Activated CD8-positive, alpha-beta T cell treated with anti-CD3 and anti-CD28 coated beads for 36 hours (primary cell): ENCODE measurements at regions of chr2 and their contacts with region 1.

Region 1: DNA sequence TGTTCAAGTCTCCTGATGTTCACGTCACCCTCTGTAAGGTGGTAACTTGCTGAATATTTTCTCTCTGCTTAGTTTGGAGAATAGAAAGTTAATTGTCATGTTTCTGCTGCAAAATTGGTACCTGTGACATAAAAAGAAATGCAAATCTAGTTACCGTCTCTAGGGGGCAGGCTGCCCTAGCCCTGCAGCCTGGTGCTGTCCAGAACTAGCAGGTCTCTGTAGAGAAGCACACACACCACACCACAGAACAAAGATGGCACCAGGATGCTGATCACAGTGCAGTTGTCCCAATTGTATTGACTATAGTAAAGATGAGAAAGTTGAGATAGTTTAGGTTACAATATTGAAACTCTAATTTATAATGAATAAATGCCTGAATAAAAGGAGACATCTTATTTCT is 47.0 kb downstream of the SLC9A4 start:
- DNase-seq: peak; percentile 43
- ATAC-seq: peak; percentile 65
- H3K4me3 Mint-ChIP-seq: no peak overlapping the region
- H3K27ac Mint-ChIP-seq: no peak overlapping the region
- H3K4me1 Mint-ChIP-seq: no peaks in the 10 kb centered on the region
- H3K27me3 Mint-ChIP-seq: no peaks in the 10 kb centered on the region
- CTCF ChIP-seq: peak; percentile 74

Region 2: DNA sequence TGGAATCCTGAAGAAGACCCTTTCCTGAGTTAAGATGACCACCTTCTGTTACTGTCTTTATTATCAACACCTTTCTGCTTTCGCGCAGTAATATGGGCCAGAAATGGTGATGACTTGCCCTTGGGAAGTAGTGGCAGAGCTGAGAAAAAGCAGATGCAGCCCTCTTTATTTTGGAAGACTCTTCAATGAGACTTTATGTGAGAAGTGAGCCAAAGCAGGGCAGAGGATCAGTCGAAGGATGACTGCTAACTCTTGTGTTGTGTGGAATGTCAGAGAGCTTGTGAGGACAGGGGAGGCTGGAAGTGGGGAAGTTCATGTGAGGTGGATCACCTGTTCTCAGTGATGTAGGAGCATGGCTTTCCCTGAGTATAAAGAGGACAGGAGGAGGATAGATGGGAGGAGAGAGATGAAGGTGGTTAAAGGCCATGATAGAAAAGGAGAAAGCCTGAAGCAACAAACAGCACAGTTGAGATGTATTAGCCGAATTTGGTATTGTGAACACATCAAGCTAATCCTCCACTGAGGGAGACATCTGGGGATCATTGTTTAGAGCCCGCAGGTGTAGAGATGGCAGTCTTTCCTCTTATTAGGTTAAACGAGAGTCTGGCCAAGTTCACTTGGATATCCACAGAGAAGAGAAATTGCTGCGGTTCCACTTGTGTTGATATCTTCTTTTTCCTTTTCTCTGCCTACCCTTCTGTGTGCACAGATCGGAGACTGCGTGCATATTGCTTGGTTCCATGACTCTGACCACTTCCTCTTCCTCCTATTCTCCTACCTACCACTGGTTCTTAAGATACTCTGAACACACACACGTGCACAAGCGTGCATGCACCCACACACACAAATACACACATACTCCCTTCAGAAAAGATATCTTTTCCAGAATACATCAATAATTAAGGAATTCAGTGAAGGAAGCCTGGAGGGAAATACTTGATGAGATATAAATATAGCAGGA is 166.7 kb after region 1 on chr2:
- CTCF ChIA-PET with region 1: no interaction called
- POLR2A ChIA-PET with region 1: no interaction called
- intact Hi-C with region 1: no loop called
- DNase-seq: peak; percentile 31
- ATAC-seq: peak; percentile 80
- H3K4me3 Mint-ChIP-seq: no peak overlapping the region
- H3K27ac Mint-ChIP-seq: no peak overlapping the region
- H3K4me1 Mint-ChIP-seq: no peaks in the 10 kb centered on the region
- H3K27me3 Mint-ChIP-seq: peaks cover 2% of the 10 kb centered on the region
- CTCF ChIP-seq: no peak

Region 3: DNA sequence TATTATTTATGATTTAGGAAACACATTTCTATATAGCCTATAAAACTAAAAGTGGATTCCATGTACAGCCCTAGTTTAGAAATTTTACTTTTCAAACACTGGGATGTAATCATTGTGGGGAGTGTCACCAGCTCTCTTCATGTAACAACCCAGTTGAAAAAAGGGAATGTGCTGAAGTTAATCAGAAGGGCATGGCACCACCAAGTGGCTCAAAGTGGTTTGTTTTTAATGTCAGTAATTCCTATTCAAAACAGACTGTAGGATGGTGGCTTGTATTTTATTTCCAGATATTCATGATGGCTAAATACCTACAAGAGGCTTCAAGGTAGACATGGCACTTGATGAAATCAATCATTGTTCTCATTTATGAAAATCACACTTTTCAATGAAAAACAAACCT is 183.7 kb after region 1 on chr2:
- CTCF ChIA-PET with region 1: interaction called, 4 read pairs
- POLR2A ChIA-PET with region 1: no interaction called
- intact Hi-C with region 1: loop called (anchors 10 kb)
- DNase-seq: peak; percentile 43
- ATAC-seq: no peak
- H3K4me3 Mint-ChIP-seq: no peak overlapping the region
- H3K27ac Mint-ChIP-seq: no peak overlapping the region
- H3K4me1 Mint-ChIP-seq: no peaks in the 10 kb centered on the region
- H3K27me3 Mint-ChIP-seq: peaks cover 6% of the 10 kb centered on the region
- CTCF ChIP-seq: peak; percentile 32